IMR-90 (cell line): ENCODE measurements at regions of chr19 and their contacts with region 1.

Region 1: DNA sequence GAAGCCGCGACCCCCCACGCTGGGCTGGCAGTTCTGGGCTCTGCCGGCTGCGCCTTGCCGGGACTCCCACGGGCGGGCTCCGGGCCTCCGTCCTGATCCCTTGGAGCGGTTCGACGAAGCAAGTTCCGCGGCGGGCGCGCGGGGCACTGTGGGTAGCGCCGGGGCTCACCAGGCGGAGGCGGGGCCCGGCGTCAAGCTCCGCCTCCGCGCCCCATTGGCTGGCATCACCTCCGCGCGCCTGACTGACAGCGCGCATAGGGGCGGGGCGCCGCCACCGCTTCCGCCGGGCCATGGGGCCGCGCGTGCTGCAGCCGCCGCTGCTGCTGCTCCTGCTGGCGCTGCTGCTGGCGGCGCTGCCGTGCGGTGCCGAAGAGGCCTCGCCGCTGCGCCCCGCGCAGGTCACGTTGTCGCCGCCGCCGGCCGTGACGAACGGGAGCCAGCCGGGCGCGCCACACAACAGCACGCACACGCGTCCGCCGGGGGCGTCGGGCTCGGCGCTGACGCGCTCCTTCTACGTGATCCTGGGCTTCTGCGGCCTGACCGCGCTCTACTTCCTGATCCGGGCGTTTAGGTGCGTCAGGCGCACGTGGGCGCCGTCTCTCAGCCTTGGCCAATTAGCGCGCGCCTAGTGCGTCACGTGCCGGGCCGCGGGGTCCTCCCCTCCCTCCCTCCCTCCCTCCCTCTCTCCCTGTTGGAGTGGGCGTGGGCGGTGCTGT is at the start of gene FAM174C:
- DNase-seq: peak; percentile 97
- ATAC-seq: peak; percentile 86
- H3K4me3 ChIP-seq: peak within 1 kb of the TSS; percentile 82
- H3K27ac ChIP-seq: peak within 1 kb of the TSS; percentile 91
- H3K4me1 ChIP-seq: peaks cover 23% of the 10 kb centered on the region
- H3K27me3 ChIP-seq: no peaks in the 10 kb centered on the region
- CTCF ChIP-seq: no peak
- POLR2A ChIP-seq: peak; percentile 66
- RAD21 ChIP-seq: no peak
- total RNA-seq, gene FAM174C: 7.5 and 10.6 TPM in 2 replicates

Region 2: GRCh38 chr19:1260636-1261537 is 14.5 kb before region 1 on chr19:
- CTCF ChIA-PET with region 1: no interaction called
- POLR2A ChIA-PET with region 1: no interaction called
- dilution Hi-C with region 1: no loop called
- in situ Hi-C with region 1: no loop called
- intact Hi-C with region 1: no loop called
- DNase-seq: peak; percentile 96
- ATAC-seq: peak; percentile 83
- H3K4me3 ChIP-seq: peak overlapping the region; percentile 51
- H3K27ac ChIP-seq: peak overlapping the region; percentile 93
- H3K4me1 ChIP-seq: peaks cover 47% of the 10 kb centered on the region
- H3K27me3 ChIP-seq: no peaks in the 10 kb centered on the region
- CTCF ChIP-seq: no peak
- POLR2A ChIP-seq: peak; percentile 64
- RAD21 ChIP-seq: no peak

Region 3: GRCh38 chr19:1360818-1361461 is 85.5 kb after region 1 on chr19:
- CTCF ChIA-PET with region 1: interaction called, 3 read pairs
- POLR2A ChIA-PET with region 1: no interaction called
- dilution Hi-C with region 1: no loop called
- in situ Hi-C with region 1: loop called (anchors 5 kb)
- intact Hi-C with region 1: loop called (anchors 5 kb)
- DNase-seq: peak; percentile 79
- ATAC-seq: peak; percentile 90
- H3K4me3 ChIP-seq: peak overlapping the region; percentile 0; the same call in 1 of the 2 replicates
- H3K27ac ChIP-seq: peak overlapping the region; percentile 20
- H3K4me1 ChIP-seq: peaks cover 19% of the 10 kb centered on the region
- H3K27me3 ChIP-seq: no peaks in the 10 kb centered on the region
- CTCF ChIP-seq: no peak
- POLR2A ChIP-seq: no peak
- RAD21 ChIP-seq: no peak

Region 4: DNA sequence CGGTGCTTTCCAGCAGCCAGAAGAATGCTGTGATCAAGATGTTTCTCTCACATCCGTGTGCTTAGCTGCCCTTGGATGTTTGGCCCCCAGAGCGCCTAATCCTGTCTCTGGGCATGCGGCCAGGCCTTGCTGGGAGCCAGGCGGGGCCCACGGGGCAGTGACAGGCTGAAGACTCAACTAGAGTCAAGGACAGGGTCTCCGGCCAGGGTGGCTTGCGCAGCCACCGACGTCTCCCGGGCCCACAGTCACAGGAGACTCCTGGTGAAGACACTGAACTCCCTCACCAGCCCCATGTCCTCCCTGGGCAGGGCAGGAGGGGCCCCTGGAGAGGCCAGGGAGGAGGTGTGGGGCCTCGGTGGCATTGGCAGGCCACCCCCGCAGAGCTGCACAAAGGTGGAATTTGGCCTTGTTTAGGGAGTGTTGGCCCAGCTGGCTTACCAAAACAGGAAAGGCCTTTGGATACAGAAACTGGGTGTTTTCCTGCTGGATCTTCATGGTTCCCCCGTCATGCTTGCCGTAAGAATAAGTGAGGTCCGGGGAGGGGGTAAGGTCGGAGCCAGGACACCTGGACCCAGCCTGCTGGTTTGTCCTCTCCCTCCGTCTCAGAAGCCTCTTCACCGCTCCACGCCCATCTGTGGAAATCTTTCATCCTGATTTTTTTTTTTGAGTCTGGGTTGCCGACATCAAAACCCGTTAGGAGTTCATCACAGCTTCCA is 98.3 kb after region 1 on chr19:
- CTCF ChIA-PET with region 1: interaction called, 4 read pairs
- POLR2A ChIA-PET with region 1: no interaction called
- dilution Hi-C with region 1: no loop called
- in situ Hi-C with region 1: no loop called
- intact Hi-C with region 1: loop called (anchors 1 kb)
- DNase-seq: peak; percentile 66
- ATAC-seq: peak; percentile 83
- H3K4me3 ChIP-seq: no peak overlapping the region
- H3K27ac ChIP-seq: 0 out of 2 replicates have a peak overlapping the region, but pooled peaks have one; percentile 7
- H3K4me1 ChIP-seq: peaks cover 9% of the 10 kb centered on the region
- H3K27me3 ChIP-seq: no peaks in the 10 kb centered on the region
- CTCF ChIP-seq: no peak
- POLR2A ChIP-seq: no peak
- RAD21 ChIP-seq: no peak

Region 5: DNA sequence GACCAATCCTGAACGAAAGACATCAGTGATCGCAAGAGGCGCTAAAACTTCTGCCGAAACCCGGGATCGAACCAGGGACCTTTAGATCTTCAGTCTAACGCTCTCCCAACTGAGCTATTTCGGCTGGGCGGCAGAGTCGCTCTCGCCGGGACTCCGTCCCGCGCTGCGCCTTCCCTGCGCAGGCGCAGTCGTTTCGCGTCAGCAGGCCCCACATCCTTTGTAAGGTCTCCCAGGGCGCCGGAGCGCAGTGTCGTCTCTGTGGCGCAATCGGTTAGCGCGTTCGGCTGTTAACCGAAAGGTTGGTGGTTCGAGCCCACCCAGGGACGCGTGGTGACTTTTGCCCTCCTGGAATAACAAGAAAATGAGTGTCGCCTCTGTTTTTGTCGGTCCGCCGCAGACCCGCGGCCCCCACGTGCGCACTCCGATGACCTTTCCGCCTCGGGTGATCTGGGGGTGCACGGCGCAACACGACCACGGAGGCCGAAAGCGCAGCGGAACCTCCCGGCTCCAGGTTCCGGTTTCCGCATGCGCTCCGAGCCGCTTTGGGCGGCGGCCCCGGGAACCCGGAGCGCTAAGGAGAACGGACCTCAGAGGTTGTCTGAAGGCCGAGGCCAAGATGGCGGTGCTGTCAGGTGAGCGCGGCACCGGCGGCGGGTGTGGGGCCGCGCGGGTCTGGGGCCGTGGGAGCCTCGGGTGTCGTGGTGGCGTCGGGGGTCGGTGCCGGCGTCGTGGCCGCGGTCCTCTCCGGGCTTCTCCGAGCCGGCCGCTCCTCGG is 108.1 kb after region 1 on chr19 and contains the start of gene NDUFS7:
- CTCF ChIA-PET with region 1: no interaction called
- POLR2A ChIA-PET with region 1: no interaction called
- dilution Hi-C with region 1: no loop called
- in situ Hi-C with region 1: no loop called
- intact Hi-C with region 1: loop called (anchors 1 kb)
- DNase-seq: peak; percentile 92
- ATAC-seq: peak; percentile 88
- H3K4me3 ChIP-seq: peak within 1 kb of the TSS; percentile 58
- H3K27ac ChIP-seq: peak within 1 kb of the TSS; percentile 62
- H3K4me1 ChIP-seq: no peaks in the 10 kb centered on the region
- H3K27me3 ChIP-seq: no peaks in the 10 kb centered on the region
- CTCF ChIP-seq: peak; percentile 18; the same call in 1 of the 2 replicates
- POLR2A ChIP-seq: peak; percentile 84
- RAD21 ChIP-seq: peak; percentile 18; the same call in 1 of the 2 replicates
- total RNA-seq, gene NDUFS7: 60.8 and 64.7 TPM in 2 replicates

Region 6: GRCh38 chr19:1406774-1407499 is 131.5 kb after region 1 on chr19:
- CTCF ChIA-PET with region 1: no interaction called
- POLR2A ChIA-PET with region 1: no interaction called
- dilution Hi-C with region 1: no loop called
- in situ Hi-C with region 1: no loop called
- intact Hi-C with region 1: loop called (anchors 5 kb)
- DNase-seq: peak; percentile 97
- ATAC-seq: peak; percentile 89
- H3K4me3 ChIP-seq: peak overlapping the region; percentile 63
- H3K27ac ChIP-seq: peak overlapping the region; percentile 83
- H3K4me1 ChIP-seq: peaks cover 25% of the 10 kb centered on the region
- H3K27me3 ChIP-seq: no peaks in the 10 kb centered on the region
- CTCF ChIP-seq: peak; percentile 46
- POLR2A ChIP-seq: no peak; the same call in 1 of the 2 replicates
- RAD21 ChIP-seq: peak; percentile 36